ENCODE measurements at regions of chr12 and their contacts with region 1.

Region 1: GRCh38 chr12:54993161-54993835 is 8.7 kb upstream of the TESPA1 start:
- DNase-seq: peak; percentile 78
- ATAC-seq: peak; percentile 72
- H3K4me3 Mint-ChIP-seq: no peak overlapping the region
- H3K27ac Mint-ChIP-seq: no peak overlapping the region
- H3K4me1 Mint-ChIP-seq: peaks cover 50% of the 10 kb centered on the region
- H3K27me3 Mint-ChIP-seq: no peaks in the 10 kb centered on the region
- CTCF ChIP-seq: peak; percentile 91

Region 2: DNA sequence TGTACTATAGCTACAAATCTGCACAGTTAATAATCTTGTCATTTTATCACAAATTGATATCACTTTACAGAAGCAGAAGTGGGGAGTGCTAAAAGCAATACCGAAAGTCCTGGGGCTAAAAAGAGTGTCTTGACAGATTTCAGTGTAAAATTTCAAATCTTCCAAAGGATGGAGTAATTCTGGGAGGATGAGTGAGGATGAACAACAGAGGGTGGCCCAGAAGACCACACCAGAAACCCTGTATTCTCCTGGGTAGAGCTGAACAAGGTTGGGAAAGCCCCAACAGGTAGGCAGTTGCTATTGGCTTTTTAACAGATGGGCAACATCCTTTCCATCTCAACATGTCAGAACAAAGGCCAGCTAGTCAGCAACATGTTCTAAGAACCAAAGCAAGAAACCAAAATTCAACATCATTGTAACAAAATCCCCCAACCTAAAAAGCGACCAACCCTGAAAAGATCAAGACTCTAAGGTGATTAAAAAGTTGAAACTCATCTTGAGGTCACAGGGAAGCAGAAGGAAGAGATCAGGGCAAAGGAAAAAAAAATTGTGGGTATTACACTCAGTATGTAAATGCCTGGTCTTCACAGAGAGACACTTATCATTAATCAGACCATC is 752.2 kb before region 1 on chr12:
- CTCF ChIA-PET with region 1: no interaction called
- POLR2A ChIA-PET with region 1: no interaction called
- intact Hi-C with region 1: no loop called
- DNase-seq: no peak
- ATAC-seq: peak; percentile 88
- H3K4me3 Mint-ChIP-seq: no peak overlapping the region
- H3K27ac Mint-ChIP-seq: peak overlapping the region; percentile 80
- H3K4me1 Mint-ChIP-seq: peaks cover 12% of the 10 kb centered on the region
- H3K27me3 Mint-ChIP-seq: no peaks in the 10 kb centered on the region
- CTCF ChIP-seq: no peak

Region 3: DNA sequence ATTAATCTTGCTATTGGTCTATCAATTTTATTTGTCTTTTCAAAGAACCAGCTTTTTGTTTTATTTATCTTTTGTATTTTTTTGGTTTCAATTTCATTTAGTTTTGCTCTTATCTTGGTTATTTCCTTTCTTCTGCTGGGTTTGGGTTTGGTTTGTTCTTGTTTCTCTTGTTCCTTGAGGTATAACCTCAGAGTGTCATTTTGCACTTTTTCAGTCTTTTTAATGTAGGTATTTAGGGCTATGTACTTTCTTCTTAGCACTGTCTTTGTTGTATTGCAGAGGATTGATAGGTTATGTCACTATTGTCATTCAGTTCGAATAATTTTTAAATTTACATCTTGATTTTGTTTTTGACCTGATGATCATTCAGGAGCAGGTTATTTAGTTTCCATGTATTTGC is 252.4 kb before region 1 on chr12:
- CTCF ChIA-PET with region 1: interaction called, 13 read pairs
- POLR2A ChIA-PET with region 1: no interaction called
- intact Hi-C with region 1: loop called (anchors 5 kb)
- DNase-seq: no peak
- ATAC-seq: no peak
- H3K4me3 Mint-ChIP-seq: no peak overlapping the region
- H3K27ac Mint-ChIP-seq: peak overlapping the region; percentile 3
- H3K4me1 Mint-ChIP-seq: peaks cover 60% of the 10 kb centered on the region
- H3K27me3 Mint-ChIP-seq: no peaks in the 10 kb centered on the region
- CTCF ChIP-seq: no peak

Region 4: GRCh38 chr12:54853995-54854566 is 139.2 kb before region 1 on chr12 and contains the start of gene MUCL1:
- CTCF ChIA-PET with region 1: interaction called, 18 read pairs
- POLR2A ChIA-PET with region 1: no interaction called
- intact Hi-C with region 1: no loop called
- DNase-seq: peak; percentile 87
- ATAC-seq: peak; percentile 100
- H3K4me3 Mint-ChIP-seq: no peak within 1 kb of the TSS
- H3K27ac Mint-ChIP-seq: no peak within 1 kb of the TSS
- H3K4me1 Mint-ChIP-seq: peaks cover 22% of the 10 kb centered on the region
- H3K27me3 Mint-ChIP-seq: no peaks in the 10 kb centered on the region
- CTCF ChIP-seq: peak; percentile 94
- total RNA-seq, gene MUCL1: not detected

Region 5: DNA sequence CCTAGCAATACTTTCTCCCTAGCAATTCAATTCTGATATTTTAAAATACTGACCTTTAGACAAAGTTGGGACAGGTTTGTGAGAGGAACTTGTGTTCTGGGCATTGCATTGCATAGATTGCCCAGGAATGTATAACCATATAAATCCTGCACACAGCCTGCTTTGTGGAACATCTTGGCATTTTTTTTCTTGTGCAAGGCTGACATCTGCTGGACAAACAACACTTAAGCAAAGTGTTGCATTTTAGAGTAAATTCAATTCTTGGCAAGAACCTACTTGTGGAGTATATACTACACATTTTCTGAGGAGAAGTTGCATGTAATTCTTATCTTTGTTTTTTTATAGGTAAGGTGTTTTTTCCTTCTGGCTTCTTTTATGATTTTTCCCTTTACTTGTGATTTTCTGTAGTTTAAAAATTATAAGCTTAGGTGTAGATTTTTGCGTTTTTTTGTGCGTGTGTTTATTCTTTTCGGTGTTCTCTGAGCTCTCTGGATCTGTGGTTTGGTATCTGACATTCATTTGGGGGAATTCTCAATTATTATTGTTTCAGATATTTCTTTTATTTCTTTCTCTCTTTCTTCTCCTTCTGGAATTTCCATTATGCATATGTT is 35.1 kb before region 1 on chr12:
- CTCF ChIA-PET with region 1: interaction called, 30 read pairs
- POLR2A ChIA-PET with region 1: interaction called, 5 read pairs
- intact Hi-C with region 1: no loop called
- DNase-seq: peak; percentile 54
- ATAC-seq: no peak
- H3K4me3 Mint-ChIP-seq: no peak overlapping the region
- H3K27ac Mint-ChIP-seq: peak overlapping the region; percentile 95
- H3K4me1 Mint-ChIP-seq: peaks cover 90% of the 10 kb centered on the region
- H3K27me3 Mint-ChIP-seq: no peaks in the 10 kb centered on the region
- CTCF ChIP-seq: peak; percentile 91

Region 6: DNA sequence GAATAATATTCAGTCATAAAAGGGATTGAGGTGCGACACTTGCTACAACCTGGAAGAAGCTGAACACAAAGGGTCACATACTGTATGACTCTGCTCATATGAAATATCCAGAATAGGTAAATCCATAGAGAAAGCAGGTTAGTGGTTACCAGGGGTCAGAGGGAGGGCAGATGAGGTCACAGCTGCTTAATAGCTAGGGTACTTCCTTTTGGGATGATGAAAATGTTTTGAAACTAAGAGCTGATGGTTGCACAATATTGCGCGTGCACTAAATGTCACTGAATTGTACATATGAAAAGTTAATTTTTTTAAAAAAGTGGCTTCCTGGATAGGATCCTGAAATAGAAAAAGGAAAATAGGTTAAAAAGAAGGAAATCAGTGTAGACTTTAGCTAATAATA is 50.2 kb after region 1 on chr12:
- CTCF ChIA-PET with region 1: interaction called, 15 read pairs
- POLR2A ChIA-PET with region 1: no interaction called
- intact Hi-C with region 1: no loop called
- DNase-seq: peak; percentile 10
- ATAC-seq: no peak
- H3K4me3 Mint-ChIP-seq: no peak overlapping the region
- H3K27ac Mint-ChIP-seq: no peak overlapping the region
- H3K4me1 Mint-ChIP-seq: peaks cover 7% of the 10 kb centered on the region
- H3K27me3 Mint-ChIP-seq: no peaks in the 10 kb centered on the region
- CTCF ChIP-seq: no peak

Region 7: GRCh38 chr12:55060470-55060869 is 67.2 kb after region 1 on chr12:
- CTCF ChIA-PET with region 1: interaction called, 707 read pairs
- POLR2A ChIA-PET with region 1: no interaction called
- intact Hi-C with region 1: no loop called
- DNase-seq: peak; percentile 67
- ATAC-seq: peak; percentile 100
- H3K4me3 Mint-ChIP-seq: no peak overlapping the region
- H3K27ac Mint-ChIP-seq: no peak overlapping the region
- H3K4me1 Mint-ChIP-seq: peaks cover 10% of the 10 kb centered on the region
- H3K27me3 Mint-ChIP-seq: peaks cover 3% of the 10 kb centered on the region
- CTCF ChIP-seq: no peak